RWPE1 (cell line): ENCODE measurements at regions of chr4 and their contacts with region 1.

Region 1: GRCh38 chr4:153573881-153574802 is 108.0 kb downstream of the TMEM131L start:
- DNase-seq: peak; percentile 36
- H3K27ac ChIP-seq: no peak overlapping the region
- CTCF ChIP-seq: peak; percentile 56

Region 2: DNA sequence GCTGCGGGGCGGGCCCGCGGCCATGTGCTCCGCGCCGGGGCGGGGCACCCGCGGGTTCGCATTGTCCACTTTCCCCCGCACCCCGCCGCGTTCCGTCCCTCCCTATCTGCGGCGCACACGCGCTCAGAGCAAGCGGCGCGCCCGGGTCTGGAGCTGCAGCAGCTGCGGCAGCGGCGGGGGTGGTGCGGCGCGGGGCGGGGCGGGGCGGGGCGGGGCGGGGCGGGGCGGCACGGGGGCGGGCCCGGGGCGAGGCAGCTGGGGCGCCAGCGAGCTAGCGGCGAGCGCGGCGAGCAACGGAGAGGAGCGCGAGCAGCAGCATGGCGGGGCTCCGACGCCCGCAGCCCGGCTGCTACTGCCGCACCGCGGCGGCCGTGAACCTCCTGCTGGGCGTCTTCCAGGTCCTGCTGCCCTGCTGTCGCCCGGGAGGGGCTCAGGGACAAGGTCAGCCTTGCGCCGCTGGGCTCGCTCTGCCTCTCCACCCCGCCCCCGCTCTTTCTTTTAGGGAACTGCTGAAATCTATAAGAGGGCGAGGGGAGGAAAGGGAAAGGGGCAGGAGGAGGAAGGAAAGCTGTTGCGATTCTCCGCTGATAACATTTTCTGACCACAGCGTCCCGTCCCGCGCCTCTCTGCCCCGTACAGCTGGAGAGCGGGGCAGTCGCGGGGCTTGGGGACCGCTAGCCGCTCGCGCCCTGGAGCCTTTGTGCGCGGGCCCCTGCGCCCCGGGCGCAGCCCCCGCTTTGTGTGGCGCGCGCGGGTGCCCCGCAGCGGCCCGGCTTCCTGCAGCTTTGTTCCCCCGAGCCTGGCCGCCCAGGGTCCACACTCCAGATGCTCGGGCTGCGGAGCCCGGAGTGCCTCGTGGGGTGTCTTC is 107.8 kb before region 1 on chr4 and contains the start of gene TMEM131L:
- CTCF ChIA-PET with region 1: interaction called, 14 read pairs
- POLR2A ChIA-PET with region 1: no interaction called
- DNase-seq: peak; percentile 71
- H3K27ac ChIP-seq: peak within 1 kb of the TSS; percentile 76
- CTCF ChIP-seq: no peak